ENCODE measurements at regions of chr14 and their contacts with region 1.

Region 1: GRCh38 chr14:102854091-102854703 is 68.3 kb upstream of the AMN start:
- DNase-seq: no peak
- H3K4me3 ChIP-seq: no peak overlapping the region
- H3K27ac ChIP-seq: no peak overlapping the region
- H3K4me1 ChIP-seq: no peaks in the 10 kb centered on the region
- H3K27me3 ChIP-seq: no peaks in the 10 kb centered on the region
- CTCF ChIP-seq: no peak

Region 2: DNA sequence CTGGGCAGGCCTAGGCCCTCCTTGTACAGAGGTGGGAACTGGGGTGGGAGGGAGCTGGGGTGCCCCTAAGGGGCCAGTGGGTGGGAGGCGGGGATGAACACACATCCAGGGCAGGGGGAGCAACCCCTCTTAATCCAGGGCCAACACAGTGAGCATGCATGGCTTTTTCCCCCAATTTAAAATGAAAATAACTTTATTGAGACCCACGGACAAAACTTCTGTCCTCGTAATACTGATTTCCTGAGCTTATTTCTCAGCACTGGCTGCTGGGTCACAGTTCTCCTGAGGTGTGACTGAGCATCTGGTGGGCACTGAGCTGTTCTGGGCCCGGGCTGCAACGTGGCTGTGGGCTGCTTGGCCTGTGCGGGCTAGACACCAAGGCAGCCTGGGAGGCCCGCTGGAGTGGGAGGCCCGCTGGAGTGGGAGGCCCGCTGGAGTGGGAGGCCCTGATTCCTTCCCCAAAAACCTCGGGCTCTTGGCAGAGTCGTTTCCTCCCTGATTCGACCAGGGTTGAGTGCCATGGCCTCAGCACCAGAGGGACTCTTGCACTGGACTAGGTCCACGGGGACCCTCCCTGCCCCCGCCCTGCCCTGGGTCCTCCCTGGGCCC is 101.9 kb before region 1 on chr14:
- CTCF ChIA-PET with region 1: no interaction called
- POLR2A ChIA-PET with region 1: interaction called, 19 read pairs
- intact Hi-C with region 1: no loop called
- DNase-seq: no peak
- H3K4me3 ChIP-seq: no peak overlapping the region
- H3K27ac ChIP-seq: no peak overlapping the region
- H3K4me1 ChIP-seq: no peaks in the 10 kb centered on the region
- H3K27me3 ChIP-seq: no peaks in the 10 kb centered on the region
- CTCF ChIP-seq: no peak

Region 3: DNA sequence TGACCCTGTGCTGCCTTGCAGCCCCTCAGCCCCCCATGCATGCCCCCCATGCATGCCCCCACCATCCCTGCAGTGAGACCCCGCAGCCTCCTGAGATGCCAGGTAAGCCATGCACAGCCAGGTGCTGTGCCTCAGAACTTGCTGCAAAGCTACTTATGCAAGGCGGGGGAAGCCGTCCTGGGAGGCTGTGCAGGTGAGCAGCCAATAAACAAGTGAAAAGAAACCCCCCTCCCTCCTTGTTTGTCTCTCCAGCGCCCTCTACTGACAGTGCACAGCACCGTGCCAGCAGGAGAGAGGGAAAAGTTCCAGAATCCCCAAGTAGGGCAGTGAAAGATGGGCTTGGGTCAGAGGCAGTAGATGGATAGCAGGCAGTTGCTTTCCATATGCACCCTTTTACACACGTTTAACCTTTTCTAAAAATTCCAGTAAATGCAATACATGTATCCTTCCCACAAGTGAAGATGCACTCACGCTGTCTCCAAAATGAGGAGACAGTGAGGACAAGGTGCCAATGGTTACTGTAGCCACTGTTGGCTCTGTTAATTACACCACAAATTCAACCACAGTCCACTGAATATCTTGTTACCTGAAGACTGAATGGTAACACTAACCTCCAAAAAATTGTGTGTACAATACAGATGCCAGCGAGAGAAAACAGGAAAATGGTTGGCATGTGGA is 287.1 kb after region 1 on chr14:
- CTCF ChIA-PET with region 1: no interaction called
- POLR2A ChIA-PET with region 1: no interaction called
- intact Hi-C with region 1: no loop called
- DNase-seq: peak; percentile 78 to 84
- H3K4me3 ChIP-seq: no peak overlapping the region
- H3K27ac ChIP-seq: 0 out of 2 replicates have a peak overlapping the region, but pooled peaks have one; percentile 30
- H3K4me1 ChIP-seq: peaks cover 59% of the 10 kb centered on the region
- H3K27me3 ChIP-seq: no peaks in the 10 kb centered on the region
- CTCF ChIP-seq: peak; percentile 99

Measured in PC-9 (cell line).